ENCODE measurements at regions of chr3 and their contacts with region 1.

Region 1: DNA sequence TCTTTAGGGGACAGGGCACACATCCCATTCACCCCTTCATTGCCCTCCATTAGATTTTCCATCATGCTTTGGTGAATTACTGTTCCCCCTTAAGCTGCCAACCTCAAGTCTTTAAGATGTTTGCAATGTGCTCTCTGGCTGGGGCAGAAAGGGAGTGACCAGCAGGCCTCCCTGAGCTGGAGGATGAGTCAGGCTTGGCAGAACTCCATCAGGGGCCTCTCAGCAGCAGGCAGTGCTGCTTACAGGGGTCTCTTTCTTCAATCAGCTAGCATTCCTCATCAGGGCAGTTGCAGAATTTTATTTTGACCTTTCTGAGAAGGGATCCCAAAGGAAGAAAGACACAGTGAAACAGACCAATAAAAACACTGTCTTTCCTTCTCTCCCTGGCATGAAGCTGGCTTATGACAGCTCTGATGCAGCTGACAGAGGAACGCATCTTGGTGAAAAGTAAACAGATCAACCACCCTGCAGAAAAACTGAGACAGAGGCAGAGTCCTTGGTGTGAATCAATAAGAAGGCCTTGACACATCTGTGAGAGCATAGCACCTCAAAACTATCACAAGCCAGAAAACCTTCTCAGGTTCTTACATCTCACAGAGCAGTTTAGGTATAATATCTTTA is 88.7 kb upstream of the MRPL3 start:
- DNase-seq: no peak
- ATAC-seq: no peak
- H3K4me3 ChIP-seq: no peak overlapping the region
- H3K27ac ChIP-seq: no peak overlapping the region
- H3K4me1 ChIP-seq: no peaks in the 10 kb centered on the region
- H3K27me3 ChIP-seq: no peaks in the 10 kb centered on the region
- CTCF ChIP-seq: no peak

Region 2: DNA sequence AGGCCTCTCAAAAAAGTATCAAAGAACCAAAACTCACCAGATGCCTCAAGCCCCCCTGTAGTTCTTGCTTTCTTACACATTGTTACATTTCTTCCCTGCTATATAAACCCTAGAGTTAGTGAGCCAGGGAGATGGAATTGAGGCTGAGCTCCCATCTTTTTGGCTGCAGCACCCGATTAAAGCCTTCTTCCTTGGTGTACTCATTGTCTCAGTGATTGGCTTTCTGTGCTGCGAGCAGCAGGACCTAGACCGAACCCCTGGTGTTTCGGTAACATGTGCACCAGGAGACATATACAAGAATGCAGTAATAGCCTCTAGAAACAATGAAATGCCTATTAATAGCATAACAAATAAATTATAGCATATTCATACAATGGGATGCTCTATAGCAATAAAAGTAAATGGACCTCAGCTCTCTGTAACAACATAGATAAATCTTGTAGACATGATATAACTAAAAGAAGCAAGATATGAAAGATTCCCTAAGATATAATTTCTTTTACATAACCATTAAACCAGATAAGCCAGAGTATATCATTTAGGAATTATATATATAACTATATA is 390.8 kb before region 1 on chr3:
- intact Hi-C with region 1: no loop called
- DNase-seq: no peak
- ATAC-seq: no peak
- H3K4me3 ChIP-seq: no peak overlapping the region
- H3K27ac ChIP-seq: no peak overlapping the region
- H3K4me1 ChIP-seq: no peaks in the 10 kb centered on the region
- H3K27me3 ChIP-seq: no peaks in the 10 kb centered on the region
- CTCF ChIP-seq: no peak

Region 3: GRCh38 chr3:131421957-131422498 is 169.5 kb before region 1 on chr3:
- intact Hi-C with region 1: no loop called
- DNase-seq: no peak
- ATAC-seq: no peak
- H3K4me3 ChIP-seq: no peak overlapping the region
- H3K27ac ChIP-seq: no peak overlapping the region
- H3K4me1 ChIP-seq: no peaks in the 10 kb centered on the region
- H3K27me3 ChIP-seq: no peaks in the 10 kb centered on the region
- CTCF ChIP-seq: no peak

Region 4: GRCh38 chr3:131553495-131554247 is 37.8 kb before region 1 on chr3:
- intact Hi-C with region 1: loop called in 1 of 2 experiments (anchors 1 kb)
- DNase-seq: no peak
- ATAC-seq: no peak
- H3K4me3 ChIP-seq: no peak overlapping the region
- H3K27ac ChIP-seq: no peak overlapping the region
- H3K4me1 ChIP-seq: no peaks in the 10 kb centered on the region
- H3K27me3 ChIP-seq: peaks cover 0 to 3% (median 0%) of the 10 kb centered on the region in 3 donors
- CTCF ChIP-seq: no peak

Region 5: DNA sequence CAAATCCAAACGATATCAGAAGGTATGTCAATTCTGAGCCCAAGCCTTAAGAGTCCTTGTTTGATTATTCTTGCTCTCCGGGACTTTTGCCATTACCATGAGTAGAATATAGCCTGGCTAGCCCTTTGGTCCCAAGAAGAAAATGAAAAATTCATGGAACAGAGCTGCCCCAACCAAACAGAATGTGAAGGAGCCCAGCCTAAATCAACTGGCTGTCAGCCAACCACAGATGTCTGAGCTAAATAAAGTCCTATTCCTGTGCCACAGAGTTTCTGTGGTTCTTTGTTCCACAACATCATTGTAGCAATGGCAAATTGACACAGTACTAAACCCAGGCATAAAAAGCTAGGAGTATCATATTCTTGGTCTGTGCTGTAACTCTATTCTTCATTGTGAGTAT is 258.1 kb after region 1 on chr3:
- intact Hi-C with region 1: no loop called
- DNase-seq: no peak
- ATAC-seq: no peak
- H3K4me3 ChIP-seq: no peak overlapping the region
- H3K27ac ChIP-seq: no peak overlapping the region
- H3K4me1 ChIP-seq: no peaks in the 10 kb centered on the region
- H3K27me3 ChIP-seq: no peaks in the 10 kb centered on the region
- CTCF ChIP-seq: no peak